Posterior vena cava (tissue), 2 donors: ENCODE measurements at regions of chr20 and their contacts with region 1.

Region 1: GRCh38 chr20:44609511-44610312 is 27.3 kb downstream of the PKIG start:
- DNase-seq: peak; percentile 96

Region 2: DNA sequence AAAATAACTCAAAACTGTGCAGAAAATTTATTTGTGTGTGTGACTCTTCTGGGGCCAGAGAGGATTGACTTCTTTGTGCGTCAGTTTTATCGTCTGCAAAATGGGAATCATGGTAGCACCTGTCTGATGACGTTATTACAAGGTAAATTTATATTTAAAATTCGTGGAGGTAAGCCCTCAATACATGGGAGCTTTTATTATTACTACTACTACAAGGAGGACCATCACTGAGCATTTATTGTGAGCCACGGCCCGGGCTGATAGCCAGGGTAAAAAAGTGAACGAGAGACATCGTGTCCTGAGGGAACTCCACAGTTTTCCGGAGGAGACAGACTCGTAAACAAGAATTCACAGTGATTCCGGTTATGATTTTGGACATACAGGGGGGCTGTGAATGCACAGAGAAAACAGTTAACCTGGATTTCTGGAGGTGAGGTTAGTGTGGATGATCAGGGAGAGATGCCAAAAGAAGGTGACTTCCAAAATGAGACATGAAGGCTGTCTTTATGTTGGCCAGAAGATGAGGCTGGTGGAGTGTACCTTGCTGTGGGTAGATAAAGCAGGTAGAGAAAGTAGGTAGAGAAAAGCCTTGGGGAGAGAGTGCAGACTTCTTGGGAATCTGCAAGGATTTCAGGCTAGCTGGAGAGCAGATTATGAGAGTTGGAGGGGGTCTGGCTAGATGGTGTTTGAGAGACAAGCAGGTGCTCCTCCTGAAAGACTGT is 77.3 kb before region 1 on chr20:
- intact Hi-C with region 1: loop called in 1 of 2 experiments (anchors 5 kb)
- DNase-seq: no peak